Common myeloid progenitor, CD34-positive (primary cell): ENCODE measurements at regions of chr20 and their contacts with region 1.

Region 1: GRCh38 chr20:50504231-50504823 is 5.9 kb upstream of the PTPN1 start:
- DNase-seq: no peak
- H3K4me3 ChIP-seq: peak overlapping the region in 1 of 7 experiments; percentile 21
- H3K27ac ChIP-seq: peak overlapping the region in 1 of 2 experiments; percentile 5
- H3K4me1 ChIP-seq: peaks cover 3 to 32% (median 8%) of the 10 kb centered on the region in 4 experiments
- H3K27me3 ChIP-seq: no peaks in the 10 kb centered on the region

Region 2: GRCh38 chr20:50308513-50309279 is 195.6 kb before region 1 on chr20:
- CTCF ChIA-PET with region 1: no interaction called
- POLR2A ChIA-PET with region 1: no interaction called
- DNase-seq: peak; percentile 51 to 63 (median 60)
- H3K4me3 ChIP-seq: no peak overlapping the region
- H3K27ac ChIP-seq: no peak overlapping the region
- H3K4me1 ChIP-seq: peaks cover 0 to 15% (median 8%) of the 10 kb centered on the region in 4 experiments
- H3K27me3 ChIP-seq: no peaks in the 10 kb centered on the region

Region 3: DNA sequence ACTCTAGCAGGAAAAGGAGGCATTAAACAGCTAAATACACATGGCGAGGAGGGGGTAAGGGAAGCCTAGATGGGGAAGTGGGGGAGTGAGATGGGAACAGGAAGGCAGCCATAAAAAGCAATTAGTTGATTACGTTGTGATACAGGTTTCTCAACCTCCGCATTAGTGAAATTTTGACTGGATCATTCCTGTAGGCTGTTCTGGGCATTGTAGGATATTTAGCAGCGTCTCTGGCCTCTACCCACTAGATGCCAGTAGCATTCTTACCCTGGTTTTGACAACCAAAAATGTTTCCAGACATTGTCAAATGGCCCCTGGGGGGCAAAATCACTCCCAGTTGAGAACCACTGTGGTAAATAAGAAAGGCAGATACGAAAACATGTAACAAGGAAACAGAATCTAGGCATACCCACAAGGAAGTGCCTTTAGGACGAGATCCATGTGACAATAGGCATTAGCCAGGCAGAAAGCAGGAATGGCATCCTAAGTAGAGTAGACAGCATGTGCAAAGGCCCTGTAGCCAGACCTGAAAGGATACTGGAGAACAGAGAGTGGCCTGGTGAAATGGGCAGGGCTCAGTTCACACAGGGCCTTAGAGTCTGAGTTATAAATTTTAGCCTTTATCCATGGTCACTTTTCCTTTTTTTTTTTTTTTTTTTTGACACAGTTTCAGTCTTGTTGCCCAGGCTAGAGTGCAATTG is 19.9 kb before region 1 on chr20:
- CTCF ChIA-PET with region 1: interaction called, 10 read pairs
- POLR2A ChIA-PET with region 1: no interaction called
- DNase-seq: no peak
- H3K4me3 ChIP-seq: peak overlapping the region in 3 of 7 experiments; percentile 48 to 72 (median 66)
- H3K27ac ChIP-seq: peak overlapping the region in 1 of 2 experiments; percentile 84
- H3K4me1 ChIP-seq: peaks cover 0 to 20% (median 15%) of the 10 kb centered on the region in 4 experiments
- H3K27me3 ChIP-seq: no peaks in the 10 kb centered on the region

Region 4: GRCh38 chr20:50516180-50516934 is 12.0 kb after region 1 on chr20:
- CTCF ChIA-PET with region 1: interaction called, 30 read pairs
- POLR2A ChIA-PET with region 1: interaction called, 3 read pairs
- DNase-seq: peak in 2 of 3 donors; percentile 52 to 61
- H3K4me3 ChIP-seq: peak overlapping the region in 4 of 7 experiments; percentile 32 to 48 (median 41)
- H3K27ac ChIP-seq: peak overlapping the region in 1 of 2 experiments; percentile 61
- H3K4me1 ChIP-seq: peaks cover 52 to 99% (median 80%) of the 10 kb centered on the region in 4 experiments
- H3K27me3 ChIP-seq: no peaks in the 10 kb centered on the region